CD8-positive, alpha-beta memory T cell (primary cell): ENCODE measurements at regions of chr16 and their contacts with region 1.

Region 1: GRCh38 chr16:57045694-57046381 is 46.5 kb upstream of the CPNE2 start:
- DNase-seq: peak in 3 of 5 donors; percentile 38 to 76 (median 48)
- H3K4me3 ChIP-seq: no peak overlapping the region
- H3K4me3 Mint-ChIP-seq: peak overlapping the region in 4 of 7 donors; percentile 15 to 54 (median 16)
- H3K27ac ChIP-seq: no peak overlapping the region
- H3K27ac Mint-ChIP-seq: peak overlapping the region; percentile 85 to 96 (median 90)
- H3K4me1 ChIP-seq: peaks cover 49% of the 10 kb centered on the region
- H3K4me1 Mint-ChIP-seq: peaks cover 41 to 67% (median 44%) of the 10 kb centered on the region in 3 donors
- H3K27me3 ChIP-seq: no peaks in the 10 kb centered on the region
- H3K27me3 Mint-ChIP-seq: peaks cover 0 to 1% of the 10 kb centered on the region in 2 donors

Region 2: DNA sequence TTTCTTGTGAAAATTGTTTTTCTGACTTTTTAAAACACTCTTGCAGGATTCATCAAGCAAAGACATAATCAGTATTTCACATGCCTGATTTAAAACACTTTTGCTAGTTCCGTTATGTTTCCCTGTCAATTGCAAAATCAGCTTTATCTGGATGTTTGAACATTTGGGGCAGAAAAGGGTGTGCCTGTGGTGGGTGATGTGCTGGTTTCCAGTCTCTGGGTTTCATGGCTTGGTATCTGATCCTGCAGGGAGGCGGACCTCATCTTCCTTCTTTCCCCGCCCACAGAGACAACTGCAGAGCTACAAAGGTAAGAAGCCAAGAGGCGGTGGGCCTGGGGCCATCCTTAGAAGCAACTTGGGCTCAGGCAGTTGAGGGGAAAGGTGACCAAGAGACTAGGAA is 14.7 kb before region 1 on chr16:
- CTCF ChIA-PET with region 1: interaction called, 18 read pairs
- POLR2A ChIA-PET with region 1: interaction called, 4 read pairs
- DNase-seq: no peak
- H3K4me3 ChIP-seq: no peak overlapping the region
- H3K4me3 Mint-ChIP-seq: peak overlapping the region in 1 of 7 donors; percentile 70
- H3K27ac ChIP-seq: no peak overlapping the region
- H3K27ac Mint-ChIP-seq: peak overlapping the region; percentile 58 to 91 (median 72)
- H3K4me1 ChIP-seq: peaks cover 81% of the 10 kb centered on the region
- H3K4me1 Mint-ChIP-seq: peaks cover 80 to 95% (median 94%) of the 10 kb centered on the region in 3 donors
- H3K27me3 ChIP-seq: no peaks in the 10 kb centered on the region
- H3K27me3 Mint-ChIP-seq: peaks cover 0 to 1% of the 10 kb centered on the region in 2 donors